ENCODE measurements at regions of chr2 and their contacts with region 1.

Region 1: GRCh38 chr2:118221666-118222594 is 133.7 kb downstream of the INSIG2 start:
- DNase-seq: peak; percentile 46
- ATAC-seq: peak; percentile 73
- H3K4me3 Mint-ChIP-seq: no peak overlapping the region
- H3K27ac Mint-ChIP-seq: no peak overlapping the region
- H3K4me1 Mint-ChIP-seq: peaks cover 19% of the 10 kb centered on the region
- H3K27me3 Mint-ChIP-seq: peaks cover 56% of the 10 kb centered on the region

Region 2: DNA sequence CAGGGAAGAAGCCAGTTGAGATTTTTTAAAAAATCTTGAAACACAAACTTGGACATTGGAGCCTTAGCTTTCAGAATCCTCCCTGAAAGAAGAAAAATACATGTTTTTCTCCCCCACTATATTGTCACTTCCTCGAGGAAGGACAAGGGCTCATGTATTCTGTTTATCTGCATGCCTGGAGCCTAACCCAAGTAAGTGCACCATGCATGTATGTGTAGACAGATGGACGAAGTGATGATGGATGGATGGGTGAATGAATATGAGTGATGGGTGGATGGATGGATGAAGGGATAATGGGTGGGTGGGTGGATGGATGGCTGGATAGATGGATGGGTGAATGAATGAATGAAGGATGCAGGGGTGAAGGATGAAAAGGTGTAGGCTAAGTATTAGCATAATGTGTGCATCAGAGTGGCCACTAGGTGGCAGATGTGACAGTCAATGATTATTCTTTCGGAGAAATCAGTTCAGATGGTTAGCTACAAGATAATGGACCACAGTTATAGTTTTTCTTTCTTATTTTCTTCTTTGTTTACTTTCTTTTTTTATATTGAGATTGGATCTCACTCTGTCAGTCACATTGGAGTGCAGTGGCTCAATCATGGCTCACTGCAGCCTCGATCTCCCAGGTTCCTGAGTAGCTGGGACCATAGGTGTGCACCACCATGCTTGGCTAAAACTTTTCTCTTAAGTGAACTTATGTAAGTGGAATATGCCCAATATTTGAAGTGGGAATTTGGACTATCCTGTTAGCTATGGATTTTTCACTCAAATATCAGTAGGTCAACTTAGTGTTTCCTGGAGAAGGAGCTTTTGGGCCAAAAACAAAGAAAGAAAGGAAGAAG is 189.5 kb before region 1 on chr2:
- CTCF ChIA-PET with region 1: interaction called, 13 read pairs
- POLR2A ChIA-PET with region 1: interaction called, 10 read pairs
- intact Hi-C with region 1: no loop called
- DNase-seq: peak; percentile 65
- ATAC-seq: peak; percentile 83
- H3K4me3 Mint-ChIP-seq: no peak overlapping the region
- H3K27ac Mint-ChIP-seq: no peak overlapping the region
- H3K4me1 Mint-ChIP-seq: no peaks in the 10 kb centered on the region
- H3K27me3 Mint-ChIP-seq: peaks cover 34% of the 10 kb centered on the region

Region 3: GRCh38 chr2:118244686-118245085 is 22.8 kb after region 1 on chr2:
- CTCF ChIA-PET with region 1: interaction called, 3 read pairs
- POLR2A ChIA-PET with region 1: no interaction called
- intact Hi-C with region 1: loop called in 1 of 2 experiments (anchors 2 kb)
- DNase-seq: no peak
- ATAC-seq: no peak
- H3K4me3 Mint-ChIP-seq: no peak overlapping the region
- H3K27ac Mint-ChIP-seq: no peak overlapping the region
- H3K4me1 Mint-ChIP-seq: no peaks in the 10 kb centered on the region
- H3K27me3 Mint-ChIP-seq: peaks cover 18% of the 10 kb centered on the region

Region 4: GRCh38 chr2:118492335-118492734 is 270.4 kb after region 1 on chr2:
- CTCF ChIA-PET with region 1: no interaction called
- POLR2A ChIA-PET with region 1: no interaction called
- intact Hi-C with region 1: loop called in 1 of 2 experiments (anchors 10 kb)
- DNase-seq: no peak
- ATAC-seq: no peak
- H3K4me3 Mint-ChIP-seq: no peak overlapping the region
- H3K27ac Mint-ChIP-seq: no peak overlapping the region
- H3K4me1 Mint-ChIP-seq: no peaks in the 10 kb centered on the region
- H3K27me3 Mint-ChIP-seq: peaks cover 12% of the 10 kb centered on the region

Region 5: DNA sequence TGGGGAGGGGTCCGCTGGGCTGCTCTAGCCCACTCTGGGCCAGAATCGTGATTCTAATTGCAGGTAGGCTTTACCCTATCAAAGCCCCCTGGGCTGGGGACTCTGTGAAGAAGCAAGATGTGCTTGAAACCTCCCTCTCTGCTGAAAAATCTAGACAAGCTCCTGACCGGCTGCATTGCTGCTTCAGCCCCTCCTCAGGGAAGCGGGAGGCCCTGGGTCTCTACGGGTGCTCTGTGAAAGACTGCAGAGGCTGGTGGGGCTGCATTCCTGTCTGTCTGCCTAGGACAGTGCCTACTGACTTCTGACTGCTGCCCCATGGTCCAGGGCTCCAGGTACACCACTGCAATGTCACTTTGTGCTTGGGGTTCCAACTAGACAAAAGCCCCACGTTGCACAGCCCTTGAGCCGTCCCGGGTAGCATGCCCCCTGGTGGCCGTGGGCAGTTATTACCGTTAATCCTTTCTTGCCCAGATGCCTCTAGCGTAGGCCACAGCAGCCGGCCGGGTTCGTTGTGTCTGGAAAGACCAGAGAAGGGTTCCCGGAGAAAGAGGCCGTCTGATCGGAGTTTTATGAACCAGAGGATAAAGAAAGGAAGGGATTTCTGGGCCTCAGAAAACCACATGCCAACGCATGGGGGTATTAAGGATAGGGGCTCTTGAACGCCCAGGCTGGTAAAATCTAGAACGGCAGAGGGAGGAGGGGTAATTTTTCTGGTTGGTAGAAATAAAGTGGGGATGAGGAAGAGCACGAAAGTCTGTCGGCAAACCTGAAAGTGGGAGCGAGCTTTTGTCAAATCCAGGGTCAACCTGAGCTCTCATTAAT is 952.5 kb after region 1 on chr2:
- CTCF ChIA-PET with region 1: no interaction called
- POLR2A ChIA-PET with region 1: no interaction called
- intact Hi-C with region 1: loop called in 1 of 2 experiments (anchors 10 kb)
- DNase-seq: peak; percentile 77
- ATAC-seq: peak; percentile 57
- H3K4me3 Mint-ChIP-seq: no peak overlapping the region
- H3K27ac Mint-ChIP-seq: no peak overlapping the region
- H3K4me1 Mint-ChIP-seq: no peaks in the 10 kb centered on the region
- H3K27me3 Mint-ChIP-seq: no peaks in the 10 kb centered on the region

Measured in activated CD4-positive, alpha-beta T cell treated with anti-CD3 and anti-CD28 coated beads for 36 hours (primary cell).